ENCODE measurements at regions of chr19 and their contacts with region 1.

Region 1: GRCh38 chr19:1243761-1244692 is 2.5 kb downstream of the ATP5F1D start:
- DNase-seq: no peak
- H3K4me3 ChIP-seq: peak overlapping the region; percentile 19 to 60 (median 40)
- H3K27ac ChIP-seq: peak overlapping the region; percentile 90 to 100 (median 98)
- H3K4me1 ChIP-seq: peaks cover 67 to 91% (median 67%) of the 10 kb centered on the region in 3 donors
- H3K27me3 ChIP-seq: no peaks in the 10 kb centered on the region
- CTCF ChIP-seq: peak; percentile 92 to 98 (median 98)
- POLR2A ChIP-seq: peak in 1 of 4 donors; percentile 21

Region 2: GRCh38 chr19:1001538-1002166 is 242.4 kb before region 1 on chr19:
- intact Hi-C with region 1: no loop called
- DNase-seq: no peak
- H3K4me3 ChIP-seq: no peak overlapping the region
- H3K27ac ChIP-seq: no peak overlapping the region
- H3K4me1 ChIP-seq: peaks cover 10 to 23% (median 19%) of the 10 kb centered on the region in 3 donors
- H3K27me3 ChIP-seq: peaks cover 8 to 82% (median 20%) of the 10 kb centered on the region in 4 donors
- CTCF ChIP-seq: peak; percentile 76 to 91 (median 85)
- POLR2A ChIP-seq: no peak

Region 3: DNA sequence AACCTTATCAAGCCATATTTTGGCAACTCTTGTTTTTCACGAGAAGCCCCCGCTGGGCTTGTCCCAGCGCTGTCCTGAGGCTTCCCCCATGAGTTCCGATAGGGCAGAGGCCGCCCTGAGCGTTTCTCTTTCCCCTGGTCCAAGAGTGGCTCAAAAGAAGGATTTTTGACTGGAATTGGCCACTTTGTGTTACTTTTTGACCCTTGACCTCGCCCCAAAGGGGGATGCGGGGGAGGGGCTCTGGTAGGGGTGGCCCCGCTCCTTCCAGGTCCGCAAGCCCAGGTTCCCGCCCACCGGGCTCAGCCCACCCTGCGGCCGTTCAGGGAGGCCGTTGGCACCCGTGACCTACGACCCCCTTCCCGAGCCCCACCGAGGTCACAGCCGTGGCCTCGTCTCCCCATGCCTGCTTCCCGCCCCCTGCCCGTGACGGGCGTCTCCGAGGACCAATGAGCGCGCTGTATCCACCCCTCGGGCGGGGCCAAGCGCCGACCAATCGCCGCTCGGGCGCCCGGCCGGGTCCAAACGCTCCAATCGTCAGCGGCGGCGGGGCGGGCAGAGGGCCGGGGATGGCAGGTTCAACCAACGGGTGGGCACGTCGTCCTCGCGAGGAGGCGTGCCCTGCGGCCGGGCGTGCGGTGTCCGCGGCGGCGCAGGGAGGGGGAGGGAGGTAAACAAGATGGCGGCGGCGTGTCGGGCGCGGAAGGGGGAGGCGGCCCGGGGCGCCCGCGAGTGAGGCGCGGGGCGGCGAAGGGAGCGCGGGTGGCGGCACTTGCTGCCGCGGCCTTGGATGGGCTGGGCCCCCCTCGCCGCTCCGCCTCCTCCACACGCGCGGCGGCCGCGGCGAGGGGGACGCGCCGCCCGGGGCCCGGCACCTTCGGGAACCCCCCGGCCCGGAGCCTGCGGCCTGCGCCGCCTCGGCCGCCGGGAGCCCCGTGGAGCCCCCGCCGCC is 38.6 kb before region 1 on chr19 and contains the start of gene STK11:
- intact Hi-C with region 1: no loop called
- DNase-seq: peak; percentile 94
- H3K4me3 ChIP-seq: peak within 1 kb of the TSS; percentile 59 to 81 (median 71)
- H3K27ac ChIP-seq: peak within 1 kb of the TSS; percentile 85 to 93 (median 90)
- H3K4me1 ChIP-seq: peaks cover 31 to 63% (median 32%) of the 10 kb centered on the region in 3 donors
- H3K27me3 ChIP-seq: no peaks in the 10 kb centered on the region
- CTCF ChIP-seq: peak in 1 of 6 experiments; percentile 4
- POLR2A ChIP-seq: peak in 3 of 4 donors; percentile 63 to 88 (median 64)
- total RNA-seq, gene STK11: 59.3 to 68.5 (median 61.6) TPM

Region 4: GRCh38 chr19:1266116-1266915 is 22.3 kb after region 1 on chr19:
- intact Hi-C with region 1: loop called (anchors 2 kb)
- DNase-seq: peak; percentile 52
- H3K4me3 ChIP-seq: peak overlapping the region; percentile 43 to 70 (median 56)
- H3K27ac ChIP-seq: peak overlapping the region; percentile 86 to 99 (median 96)
- H3K4me1 ChIP-seq: peaks cover 71 to 94% (median 73%) of the 10 kb centered on the region in 3 donors
- H3K27me3 ChIP-seq: no peaks in the 10 kb centered on the region
- CTCF ChIP-seq: peak in 1 of 6 experiments; percentile 14
- POLR2A ChIP-seq: peak in 1 of 4 donors; percentile 50

Region 5: DNA sequence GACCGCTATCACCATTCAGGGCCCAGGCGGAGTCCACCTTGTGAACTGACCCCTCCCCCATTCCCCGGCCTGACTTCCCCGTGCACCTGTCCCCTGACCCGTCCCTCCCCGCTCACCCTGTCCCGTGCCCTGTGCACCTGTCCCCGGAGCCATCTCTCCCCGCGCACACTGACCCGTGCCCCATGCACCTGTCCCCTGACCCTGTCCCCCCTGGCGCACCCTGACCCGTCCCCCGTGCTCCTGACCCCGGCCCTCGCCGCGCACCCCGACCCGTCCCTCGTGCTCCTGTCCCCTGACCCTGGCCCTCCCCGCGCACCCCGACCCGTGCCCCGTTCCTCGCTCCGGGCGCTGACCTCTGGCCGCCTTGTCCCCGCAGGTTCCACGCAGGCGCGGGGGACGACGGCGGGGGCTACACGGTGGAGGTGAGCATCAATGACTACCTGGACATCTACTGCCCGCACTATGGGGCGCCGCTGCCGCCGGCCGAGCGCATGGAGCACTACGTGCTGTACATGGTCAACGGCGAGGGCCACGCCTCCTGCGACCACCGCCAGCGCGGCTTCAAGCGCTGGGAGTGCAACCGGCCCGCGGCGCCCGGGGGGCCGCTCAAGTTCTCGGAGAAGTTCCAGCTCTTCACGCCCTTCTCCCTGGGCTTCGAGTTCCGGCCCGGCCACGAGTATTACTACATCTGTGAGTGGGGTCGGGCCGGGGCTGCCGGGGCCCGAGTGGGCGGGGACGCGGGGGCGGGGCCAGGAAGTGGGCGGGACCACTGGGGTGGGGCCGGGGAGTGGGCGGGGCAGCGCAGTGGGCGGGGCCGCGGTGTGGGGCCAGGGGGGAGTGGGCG is 51.4 kb after region 1 on chr19:
- intact Hi-C with region 1: no loop called
- DNase-seq: no peak
- H3K4me3 ChIP-seq: peak overlapping the region in 2 of 4 donors; percentile 16 to 40
- H3K27ac ChIP-seq: no peak overlapping the region
- H3K4me1 ChIP-seq: peaks cover 0 to 17% (median 7%) of the 10 kb centered on the region in 3 donors
- H3K27me3 ChIP-seq: peaks cover 0 to 82% (median 10%) of the 10 kb centered on the region in 4 donors
- CTCF ChIP-seq: no peak
- POLR2A ChIP-seq: no peak

Measured in esophagus squamous epithelium (tissue), 5 donors.